HEK293T (cell line): ENCODE measurements at regions of chr6 and their contacts with region 1.

Region 1: DNA sequence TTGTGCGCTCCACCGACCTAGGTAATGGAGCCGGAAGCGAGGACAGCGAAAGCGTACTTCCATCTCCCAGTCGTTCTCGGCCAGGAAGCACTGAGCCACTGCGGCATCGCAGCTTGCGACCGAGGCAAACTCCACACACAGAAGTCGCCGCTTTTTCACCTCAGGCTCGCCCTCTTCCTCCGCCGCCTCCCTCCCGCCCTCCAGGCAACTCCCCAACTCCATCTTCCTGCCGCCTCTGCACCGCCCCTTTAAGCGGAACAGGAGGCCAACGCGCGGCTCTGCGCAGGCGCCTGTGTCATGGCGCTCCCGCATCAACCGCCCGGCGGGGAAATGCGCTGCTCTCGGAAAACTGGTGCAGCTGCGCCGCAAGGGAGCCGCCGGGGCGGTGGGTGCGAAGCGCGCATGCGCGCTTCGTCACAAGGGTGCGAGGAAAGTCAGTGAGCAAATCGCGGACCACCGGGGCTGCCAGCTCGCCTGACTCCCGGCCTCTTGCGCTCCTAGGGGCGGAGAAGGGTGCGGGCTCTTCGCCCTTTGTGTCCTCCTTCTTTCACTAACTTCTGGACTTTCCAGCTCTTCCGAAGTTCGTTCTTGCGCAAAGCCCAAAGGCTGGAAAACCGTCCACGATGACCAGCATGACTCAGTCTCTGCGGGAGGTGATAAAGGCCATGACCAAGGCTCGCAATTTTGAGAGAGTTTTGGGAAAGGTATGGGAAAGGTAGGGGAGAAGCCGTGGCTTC is at the starts of genes ACOT13 and TDP2:
- DNase-seq: peak; percentile 97

Region 2: DNA sequence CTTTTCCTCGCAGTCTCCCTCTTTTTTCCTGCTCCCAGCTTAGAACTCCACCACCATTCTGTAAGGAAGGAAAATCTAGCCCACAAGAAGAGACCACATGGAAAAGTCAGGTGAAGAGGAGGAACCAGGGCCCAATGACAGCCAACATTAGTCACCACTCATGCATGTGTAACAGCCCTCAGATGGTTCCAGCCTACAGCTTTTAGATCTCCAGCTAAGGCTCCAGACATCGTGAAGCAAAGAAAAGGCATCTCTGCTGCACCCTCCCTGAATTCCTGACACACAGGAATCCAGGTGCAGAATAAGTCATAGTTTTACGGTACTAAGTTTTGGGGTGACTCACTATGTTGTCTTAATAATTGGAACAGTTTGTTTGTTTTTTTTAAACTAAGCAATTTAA is 334.5 kb before region 1 on chr6:
- CTCF ChIA-PET with region 1: no interaction called
- POLR2A ChIA-PET with region 1: no interaction called
- DNase-seq: no peak

Region 3: GRCh38 chr6:24646782-24647181 is 20.0 kb before region 1 on chr6:
- CTCF ChIA-PET with region 1: interaction called, 3 read pairs
- POLR2A ChIA-PET with region 1: interaction called, 14 read pairs
- DNase-seq: no peak